ENCODE measurements at regions of chr5 and their contacts with region 1.

Region 1: DNA sequence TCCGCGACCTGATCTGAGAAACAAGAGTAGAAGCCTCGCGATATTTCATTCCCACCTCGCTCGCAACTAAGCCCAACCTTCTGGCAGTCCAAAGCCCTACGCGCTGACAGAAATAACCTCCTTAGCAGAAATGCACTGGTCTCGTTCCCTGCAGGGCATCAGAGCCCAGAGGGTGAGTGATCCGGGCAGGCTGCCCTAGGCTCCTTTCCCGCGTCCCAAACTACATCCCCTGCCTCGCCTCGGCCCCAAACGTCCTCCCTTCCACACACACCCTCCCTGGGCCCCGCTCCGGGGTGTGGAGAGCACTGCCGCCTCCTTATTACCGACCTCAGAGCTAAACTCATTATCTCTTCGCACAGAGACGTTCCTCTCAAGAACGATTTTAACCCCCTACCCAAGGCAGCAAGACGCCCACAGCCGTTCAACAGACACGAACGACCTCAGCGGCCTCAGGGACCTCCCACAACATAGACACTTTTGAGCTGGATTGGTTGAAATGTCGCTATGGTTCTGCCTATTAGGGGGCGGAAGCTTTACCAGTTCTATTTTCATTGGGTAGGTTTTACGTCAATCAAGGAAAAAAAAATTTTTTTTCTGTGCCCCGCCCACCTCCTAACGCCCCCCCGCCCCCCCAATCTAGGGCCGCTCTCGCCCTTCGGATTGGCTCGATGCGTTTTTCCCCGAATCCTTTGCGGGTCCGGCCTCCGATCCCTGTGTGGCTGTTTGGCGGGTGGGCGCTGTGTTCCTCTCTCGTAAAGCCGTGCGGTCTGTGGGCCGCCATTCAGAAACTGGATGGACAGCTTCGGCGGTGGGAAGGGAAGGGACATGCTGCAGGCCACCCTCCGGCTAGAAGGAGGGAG is at the start of gene CETN3:
- DNase-seq: peak; percentile 85 to 94 (median 89)
- H3K4me3 ChIP-seq: peak within 1 kb of the TSS; percentile 87
- H3K4me3 Mint-ChIP-seq: no peak within 1 kb of the TSS
- H3K27ac ChIP-seq: peak within 1 kb of the TSS; percentile 95
- H3K27ac Mint-ChIP-seq: no peak within 1 kb of the TSS
- H3K4me1 ChIP-seq: peaks cover 13% of the 10 kb centered on the region
- H3K4me1 Mint-ChIP-seq: peaks cover 14 to 21% (median 19%) of the 10 kb centered on the region in 3 donors
- H3K27me3 ChIP-seq: no peaks in the 10 kb centered on the region
- H3K27me3 Mint-ChIP-seq: no peaks in the 10 kb centered on the region
- total RNA-seq, gene CETN3: 41.0 to 41.6 TPM

Region 2: GRCh38 chr5:90474235-90475109 is 64.9 kb after region 1 on chr5 and contains the starts of genes MBLAC2 and POLR3G:
- CTCF ChIA-PET with region 1: interaction called, 8 read pairs
- POLR2A ChIA-PET with region 1: interaction called, 36 read pairs
- DNase-seq: peak; percentile 88 to 94 (median 91)
- H3K4me3 ChIP-seq: peak within 1 kb of the TSS; percentile 87
- H3K4me3 Mint-ChIP-seq: peak within 1 kb of the TSS; percentile 95 to 100 (median 98)
- H3K27ac ChIP-seq: peak within 1 kb of the TSS; percentile 80
- H3K27ac Mint-ChIP-seq: peak within 1 kb of the TSS; percentile 90 to 98 (median 95)
- H3K4me1 ChIP-seq: peaks cover 15% of the 10 kb centered on the region
- H3K4me1 Mint-ChIP-seq: peaks cover 35 to 53% (median 51%) of the 10 kb centered on the region in 3 donors
- H3K27me3 ChIP-seq: no peaks in the 10 kb centered on the region
- H3K27me3 Mint-ChIP-seq: no peaks in the 10 kb centered on the region
- total RNA-seq, gene MBLAC2: 6.3 to 6.7 TPM
- total RNA-seq, gene POLR3G: 14.7 to 15.1 TPM